Activated CD4-positive, alpha-beta T cell treated with anti-CD3 and anti-CD28 coated beads, Interleukin-2, amount 10 ng/mL, durations not matched to agents 7 days and 5 days (primary cell): ENCODE measurements at regions of chr2 and their contacts with region 1.

Region 1: DNA sequence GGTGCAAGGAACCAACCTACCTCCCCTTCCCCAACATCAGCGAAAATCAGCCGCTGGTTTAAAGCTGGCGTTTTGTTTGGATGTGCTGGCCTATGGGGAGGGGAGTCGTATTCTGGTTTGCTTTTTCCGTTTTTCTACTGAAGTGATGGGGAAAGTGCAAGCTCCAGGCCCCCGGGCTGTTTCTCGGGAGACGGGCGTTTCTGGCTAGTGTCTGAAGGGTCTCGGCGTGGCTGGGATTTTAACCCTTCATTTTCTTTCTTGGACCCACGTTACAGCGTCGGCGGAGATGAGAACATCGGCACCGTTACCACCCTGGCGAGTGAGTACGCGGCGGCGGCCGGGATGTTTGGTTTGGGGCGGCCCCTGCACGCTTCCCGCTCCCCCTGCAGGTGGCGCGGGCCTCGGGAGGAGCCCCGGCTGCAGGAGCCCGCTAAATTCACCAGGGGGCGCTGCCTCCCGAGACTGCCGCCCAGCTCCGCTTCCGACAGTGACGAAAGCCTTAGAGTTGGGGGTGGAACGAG is 70.7 kb downstream of the PLB1 start:
- DNase-seq: peak; percentile 89
- H3K4me3 Mint-ChIP-seq: peak overlapping the region; percentile 90
- H3K27ac Mint-ChIP-seq: peak overlapping the region; percentile 86
- H3K4me1 Mint-ChIP-seq: peaks cover 30% of the 10 kb centered on the region
- H3K27me3 Mint-ChIP-seq: peaks cover 11% of the 10 kb centered on the region

Region 2: GRCh38 chr2:28475088-28475605 is 91.4 kb before region 1 on chr2:
- CTCF ChIA-PET with region 1: no interaction called
- POLR2A ChIA-PET with region 1: no interaction called
- DNase-seq: no peak
- H3K4me3 Mint-ChIP-seq: no peak overlapping the region
- H3K27ac Mint-ChIP-seq: no peak overlapping the region
- H3K4me1 Mint-ChIP-seq: peaks cover 10% of the 10 kb centered on the region
- H3K27me3 Mint-ChIP-seq: no peaks in the 10 kb centered on the region

Region 3: GRCh38 chr2:28547906-28548600 is 18.5 kb before region 1 on chr2:
- CTCF ChIA-PET with region 1: interaction called, 13 read pairs
- POLR2A ChIA-PET with region 1: no interaction called
- DNase-seq: no peak
- H3K4me3 Mint-ChIP-seq: no peak overlapping the region
- H3K27ac Mint-ChIP-seq: no peak overlapping the region
- H3K4me1 Mint-ChIP-seq: peaks cover 39% of the 10 kb centered on the region
- H3K27me3 Mint-ChIP-seq: no peaks in the 10 kb centered on the region

Region 4: DNA sequence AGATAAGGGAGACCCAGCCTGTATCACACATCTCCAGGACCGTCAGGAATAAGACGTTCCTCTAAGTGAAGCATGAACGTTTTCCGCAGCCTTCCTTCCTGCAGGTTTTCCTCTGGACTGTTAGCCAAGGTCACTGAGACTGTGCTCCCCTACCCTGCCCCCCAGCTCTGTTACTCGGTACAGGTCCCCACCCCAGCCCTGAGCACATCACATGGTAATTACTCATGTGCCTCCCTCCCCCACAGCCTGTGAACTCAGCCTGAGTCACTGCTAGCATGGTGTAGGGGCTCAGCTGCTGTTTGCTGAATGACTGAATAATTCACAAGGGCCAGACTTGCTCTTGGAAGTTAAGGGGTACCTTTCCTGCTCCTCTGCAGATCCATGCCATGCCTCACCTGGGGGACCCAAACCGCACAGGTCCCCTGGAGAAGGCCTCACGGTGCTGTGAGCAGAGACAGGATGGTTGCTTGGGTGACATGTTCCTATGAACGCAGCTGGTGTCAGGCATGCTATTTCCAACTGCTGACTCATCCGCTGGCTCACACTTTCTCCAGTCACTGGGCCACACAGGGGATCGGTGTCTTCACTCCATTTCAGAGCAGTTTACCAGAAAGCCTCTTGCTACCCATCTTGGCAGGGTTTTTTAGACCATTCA is 17.4 kb after region 1 on chr2:
- CTCF ChIA-PET with region 1: interaction called, 61 read pairs
- POLR2A ChIA-PET with region 1: no interaction called
- DNase-seq: peak; percentile 39
- H3K4me3 Mint-ChIP-seq: no peak overlapping the region
- H3K27ac Mint-ChIP-seq: peak overlapping the region; percentile 76
- H3K4me1 Mint-ChIP-seq: peaks cover 63% of the 10 kb centered on the region
- H3K27me3 Mint-ChIP-seq: no peaks in the 10 kb centered on the region

Region 5: DNA sequence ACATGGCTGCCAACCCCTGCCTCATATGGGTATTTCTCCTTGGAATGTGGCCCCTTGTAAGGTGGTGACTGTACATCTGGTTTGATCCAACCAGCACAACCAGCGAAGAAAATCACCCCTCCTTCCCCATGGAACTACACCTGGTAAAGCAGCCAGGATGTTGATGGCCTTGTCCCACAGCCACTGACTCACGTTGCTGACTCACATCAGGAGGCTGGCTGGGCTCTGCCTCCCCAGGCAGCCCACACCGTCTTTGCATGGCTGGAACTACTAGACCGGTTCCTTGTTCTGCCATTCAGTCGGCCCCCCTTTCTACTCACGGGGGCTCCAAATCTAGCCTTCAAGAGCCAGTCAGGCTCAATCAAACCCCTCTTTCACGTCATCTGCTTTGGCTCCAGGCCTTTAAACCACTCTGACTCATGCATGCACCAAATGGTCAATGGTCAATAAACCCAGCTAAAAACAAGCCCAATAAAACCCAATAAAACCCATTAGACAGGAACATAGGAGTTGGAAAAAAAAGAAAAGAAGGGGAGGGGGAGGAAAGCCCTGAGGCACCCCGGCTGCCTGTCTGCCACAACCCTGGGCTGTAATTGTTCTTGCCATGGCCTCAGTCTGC is 44.1 kb after region 1 on chr2:
- CTCF ChIA-PET with region 1: interaction called, 10 read pairs
- POLR2A ChIA-PET with region 1: no interaction called
- DNase-seq: no peak
- H3K4me3 Mint-ChIP-seq: no peak overlapping the region
- H3K27ac Mint-ChIP-seq: no peak overlapping the region
- H3K4me1 Mint-ChIP-seq: peaks cover 38% of the 10 kb centered on the region
- H3K27me3 Mint-ChIP-seq: no peaks in the 10 kb centered on the region

Region 6: DNA sequence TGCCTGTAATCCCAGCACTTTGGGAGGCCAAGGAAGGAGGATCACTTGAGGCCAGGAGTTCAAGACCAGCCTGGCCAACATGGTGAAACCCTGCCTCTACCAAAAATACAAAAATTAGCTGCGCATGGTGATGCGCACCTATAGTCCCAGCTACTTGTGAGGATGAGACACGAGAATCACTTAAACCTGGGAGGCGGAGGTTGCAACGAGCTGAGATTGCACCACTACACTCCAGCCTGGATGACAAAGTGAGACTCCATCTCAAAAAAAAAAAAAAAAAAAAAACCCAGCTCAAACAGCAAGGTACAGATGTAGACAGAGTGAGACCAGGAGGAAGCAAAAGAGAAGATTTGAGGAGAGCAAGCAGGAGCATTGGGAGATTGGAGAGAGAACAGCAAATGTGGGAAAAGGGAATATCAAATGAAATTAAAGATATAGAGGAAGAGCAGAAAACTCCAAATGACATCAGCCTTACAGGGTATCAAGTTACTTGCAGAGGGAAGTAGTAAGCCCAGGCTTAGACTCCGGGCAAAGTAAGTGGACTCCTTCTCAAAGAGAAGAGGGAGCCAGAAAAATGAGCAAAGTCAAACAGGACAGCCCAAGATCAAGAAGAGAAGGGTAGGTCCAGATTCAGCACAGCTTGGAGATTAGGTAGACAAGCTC is 91.7 kb after region 1 on chr2:
- CTCF ChIA-PET with region 1: no interaction called
- POLR2A ChIA-PET with region 1: no interaction called
- DNase-seq: no peak
- H3K4me3 Mint-ChIP-seq: no peak overlapping the region
- H3K27ac Mint-ChIP-seq: no peak overlapping the region
- H3K4me1 Mint-ChIP-seq: peaks cover 21% of the 10 kb centered on the region
- H3K27me3 Mint-ChIP-seq: peaks cover 3% of the 10 kb centered on the region

Region 7: GRCh38 chr2:28802975-28803429 is 236.4 kb after region 1 on chr2:
- CTCF ChIA-PET with region 1: interaction called, 13 read pairs
- POLR2A ChIA-PET with region 1: no interaction called
- DNase-seq: no peak
- H3K4me3 Mint-ChIP-seq: no peak overlapping the region
- H3K27ac Mint-ChIP-seq: peak overlapping the region; percentile 50
- H3K4me1 Mint-ChIP-seq: peaks cover 3% of the 10 kb centered on the region
- H3K27me3 Mint-ChIP-seq: no peaks in the 10 kb centered on the region